ENCODE measurements at regions of chr3 and their contacts with region 1.

Region 1: GRCh38 chr3:16253601-16254000 is 11.1 kb downstream of the DPH3 start:
- DNase-seq: no peak
- ATAC-seq: no peak
- H3K4me3 ChIP-seq: no peak overlapping the region
- H3K27ac ChIP-seq: no peak overlapping the region
- H3K4me1 ChIP-seq: peaks cover 40% of the 10 kb centered on the region
- H3K27me3 ChIP-seq: no peaks in the 10 kb centered on the region
- CTCF ChIP-seq: no peak
- EP300 ChIP-seq: no peak
- POLR2A ChIP-seq: no peak
- RAD21 ChIP-seq: no peak

Region 2: DNA sequence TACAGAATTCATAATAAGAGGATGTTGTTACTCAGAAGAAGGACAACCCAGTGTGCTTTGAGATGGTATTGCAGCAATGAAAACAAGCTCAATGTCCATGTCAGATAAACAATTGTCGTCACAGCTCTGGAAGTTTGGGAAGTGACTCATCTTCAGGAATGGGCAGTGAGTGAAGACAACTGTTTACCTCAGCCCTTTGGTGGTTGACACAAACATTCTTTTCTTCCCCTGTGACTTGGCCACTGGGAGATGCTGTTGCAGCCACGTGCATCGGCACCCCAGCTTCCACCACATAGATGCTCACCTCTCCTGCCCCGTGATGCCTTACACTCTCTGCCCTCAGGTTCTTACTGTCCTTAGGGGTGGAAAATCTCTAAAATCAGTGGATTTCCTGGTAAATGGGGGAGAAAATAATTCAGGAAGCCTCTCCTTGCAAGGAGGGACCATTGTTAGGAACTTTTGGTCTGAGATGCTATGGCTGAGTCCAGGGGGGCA is 193.2 kb before region 1 on chr3:
- CTCF ChIA-PET with region 1: no interaction called
- POLR2A ChIA-PET with region 1: interaction called, 22 read pairs
- in situ Hi-C with region 1: no loop called
- intact Hi-C with region 1: loop called (anchors 5 kb)
- DNase-seq: peak; percentile 98
- ATAC-seq: peak; percentile 94
- H3K4me3 ChIP-seq: peak overlapping the region in 1 of 3 experiments; percentile 26; a peak in 1 of 6 replicates
- H3K27ac ChIP-seq: peak overlapping the region; percentile 69
- H3K4me1 ChIP-seq: peaks cover 58% of the 10 kb centered on the region
- H3K27me3 ChIP-seq: no peaks in the 10 kb centered on the region
- CTCF ChIP-seq: peak; percentile 84
- EP300 ChIP-seq: peak; percentile 64 to 96; a peak in 3 of 4 replicates
- POLR2A ChIP-seq: no peak
- RAD21 ChIP-seq: peak; percentile 15; the same call in 1 of the 2 replicates

Region 3: DNA sequence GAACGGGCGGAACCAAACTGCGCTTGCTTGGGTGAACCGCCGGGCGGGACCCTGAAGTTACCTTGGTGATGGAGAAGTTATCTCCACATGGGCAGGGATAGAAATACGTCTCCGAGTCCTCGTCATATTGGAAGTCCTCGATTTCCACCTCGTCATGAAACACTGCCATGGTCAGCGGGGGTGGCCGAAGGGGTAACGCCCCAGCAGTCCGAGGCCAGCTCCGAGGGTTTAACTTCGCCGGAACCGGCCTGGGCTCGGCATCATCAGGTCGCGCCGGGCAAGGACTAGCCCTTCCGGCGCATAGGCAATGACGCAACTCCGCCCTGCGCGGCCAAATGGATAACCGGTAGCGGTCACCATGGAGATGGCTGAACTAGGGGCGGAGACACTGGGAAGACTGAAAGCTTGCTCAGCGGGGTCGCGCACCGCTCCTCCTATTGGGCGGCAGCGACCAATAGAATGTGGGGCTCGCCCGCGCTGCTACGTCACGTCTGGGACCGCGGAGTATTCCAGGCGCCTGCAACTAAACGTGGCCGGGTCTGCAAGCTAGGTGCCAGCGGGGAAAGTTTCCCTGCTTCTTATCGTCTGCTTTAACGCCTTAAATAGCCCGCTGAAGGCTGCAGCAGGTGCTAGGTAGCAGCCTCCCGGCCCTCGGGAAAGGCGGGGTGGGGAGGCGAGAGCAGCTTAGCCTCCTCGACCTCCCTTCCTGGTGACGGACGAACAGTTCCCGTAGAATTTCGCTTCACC is 11.3 kb after region 1 on chr3 and contains the starts of genes DPH3 and OXNAD1:
- CTCF ChIA-PET with region 1: interaction called, 3 read pairs
- POLR2A ChIA-PET with region 1: interaction called, 112 read pairs
- in situ Hi-C with region 1: no loop called
- intact Hi-C with region 1: loop called (anchors 1 kb)
- DNase-seq: peak; percentile 98
- ATAC-seq: peak; percentile 98
- H3K4me3 ChIP-seq: peak within 1 kb of the TSS; percentile 88 to 97 (median 97)
- H3K27ac ChIP-seq: peak within 1 kb of the TSS; percentile 93
- H3K4me1 ChIP-seq: peaks cover 36% of the 10 kb centered on the region
- H3K27me3 ChIP-seq: no peaks in the 10 kb centered on the region; a peak in 1 of 5 replicates
- CTCF ChIP-seq: peak; percentile 6; the same call in 1 of the 2 replicates
- EP300 ChIP-seq: peak in 1 of 2 experiments; percentile 30; a peak in 2 of 4 replicates
- POLR2A ChIP-seq: peak; percentile 88 to 95
- RAD21 ChIP-seq: 0 out of 2 replicates have a peak, but pooled peaks have one; percentile 13
- total RNA-seq, gene DPH3: 21.6 and 40.0 TPM in 2 replicates
- total RNA-seq, gene OXNAD1: 18.8 and 25.2 TPM in 2 replicates